Common myeloid progenitor, CD34-positive (primary cell): ENCODE measurements at regions of chr1 and their contacts with region 1.

Region 1: DNA sequence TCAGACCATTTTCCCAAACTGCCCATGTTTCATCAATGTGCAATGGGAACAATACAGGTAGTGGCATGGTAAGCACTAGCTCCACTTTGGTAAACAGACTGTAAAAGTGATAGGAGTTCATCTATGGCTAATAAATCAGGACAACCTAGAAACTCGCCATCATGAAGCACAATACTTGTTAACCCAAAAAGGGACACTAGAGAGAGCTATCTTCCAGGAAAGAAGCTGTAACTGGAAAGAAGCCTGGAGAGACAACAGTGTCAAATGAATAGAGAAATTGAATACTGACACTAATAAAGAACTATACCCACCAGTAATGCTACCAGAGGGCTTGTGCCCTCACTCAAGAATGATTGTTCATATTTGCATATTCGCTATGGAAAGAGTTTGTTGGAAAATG is 164.7 kb upstream of the RGS18 start:
- DNase-seq: peak; percentile 28 to 59 (median 45)
- H3K4me3 ChIP-seq: no peak overlapping the region
- H3K27ac ChIP-seq: no peak overlapping the region
- H3K4me1 ChIP-seq: no peaks in the 10 kb centered on the region
- H3K27me3 ChIP-seq: no peaks in the 10 kb centered on the region

Region 2: GRCh38 chr1:192010406-192010805 is 16.9 kb after region 1 on chr1:
- CTCF ChIA-PET with region 1: no interaction called
- POLR2A ChIA-PET with region 1: no interaction called
- DNase-seq: peak in 1 of 3 donors; percentile 9
- H3K4me3 ChIP-seq: no peak overlapping the region
- H3K27ac ChIP-seq: no peak overlapping the region
- H3K4me1 ChIP-seq: no peaks in the 10 kb centered on the region
- H3K27me3 ChIP-seq: no peaks in the 10 kb centered on the region

Region 3: GRCh38 chr1:192311281-192311680 is 317.7 kb after region 1 on chr1:
- CTCF ChIA-PET with region 1: interaction called, 19 read pairs
- POLR2A ChIA-PET with region 1: no interaction called
- DNase-seq: peak; percentile 73 to 85 (median 79)
- H3K4me3 ChIP-seq: no peak overlapping the region
- H3K27ac ChIP-seq: no peak overlapping the region
- H3K4me1 ChIP-seq: no peaks in the 10 kb centered on the region
- H3K27me3 ChIP-seq: no peaks in the 10 kb centered on the region